ENCODE measurements at regions of chr5 and their contacts with region 1.

Region 1: GRCh38 chr5:118791926-118792734 is 196.2 kb downstream of the DTWD2 start:
- DNase-seq: peak; percentile 51 to 82 (median 79)
- H3K4me3 ChIP-seq: peak overlapping the region in 2 of 7 experiments; percentile 47 to 50
- H3K27ac ChIP-seq: peak overlapping the region in 1 of 2 experiments; percentile 50
- H3K4me1 ChIP-seq: peaks cover 0 to 12% (median 5%) of the 10 kb centered on the region in 4 experiments
- H3K27me3 ChIP-seq: no peaks in the 10 kb centered on the region

Region 2: GRCh38 chr5:118616281-118616680 is 175.8 kb before region 1 on chr5:
- CTCF ChIA-PET with region 1: no interaction called
- POLR2A ChIA-PET with region 1: no interaction called
- DNase-seq: no peak
- H3K4me3 ChIP-seq: no peak overlapping the region
- H3K27ac ChIP-seq: no peak overlapping the region
- H3K4me1 ChIP-seq: no peaks in the 10 kb centered on the region
- H3K27me3 ChIP-seq: no peaks in the 10 kb centered on the region

Region 3: DNA sequence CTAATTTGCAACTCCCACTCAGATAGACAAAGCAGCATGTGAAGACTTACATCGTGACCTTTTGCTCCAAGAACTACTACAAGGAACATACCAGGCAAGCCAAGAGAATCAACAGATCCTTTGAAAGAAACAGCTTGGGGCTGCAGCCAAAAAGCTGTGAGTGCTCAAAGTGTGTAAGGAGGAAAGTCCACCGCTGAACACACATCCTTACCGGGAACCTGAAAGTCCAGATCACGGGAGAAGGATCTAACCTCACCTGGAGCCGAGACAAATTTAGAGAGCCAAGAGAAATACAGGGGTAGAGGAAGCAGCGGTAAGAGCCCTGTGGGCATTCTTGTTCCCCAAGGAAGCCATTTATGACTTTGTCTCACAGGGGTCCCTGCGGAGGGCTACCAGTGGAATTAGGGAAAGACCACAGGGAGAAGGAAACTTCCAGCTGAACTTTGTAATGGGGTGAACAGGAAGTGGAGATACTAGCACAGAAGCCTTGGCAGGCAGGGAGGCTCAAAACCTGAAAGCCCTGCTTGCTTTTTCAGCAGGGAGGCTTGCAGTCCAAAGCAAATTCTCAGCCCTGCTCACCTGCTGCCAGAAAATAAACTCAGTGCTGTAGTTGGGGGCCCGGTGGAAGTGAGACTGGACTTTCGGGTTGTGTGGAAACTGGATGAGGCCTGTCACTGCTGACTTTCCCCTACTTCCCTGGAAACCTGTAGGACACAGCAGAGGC is 154.0 kb before region 1 on chr5:
- CTCF ChIA-PET with region 1: no interaction called
- POLR2A ChIA-PET with region 1: no interaction called
- DNase-seq: no peak
- H3K4me3 ChIP-seq: no peak overlapping the region
- H3K27ac ChIP-seq: no peak overlapping the region
- H3K4me1 ChIP-seq: no peaks in the 10 kb centered on the region
- H3K27me3 ChIP-seq: no peaks in the 10 kb centered on the region

Region 4: GRCh38 chr5:118825226-118825625 is 33.1 kb after region 1 on chr5:
- CTCF ChIA-PET with region 1: interaction called, 11 read pairs
- POLR2A ChIA-PET with region 1: interaction called, 3 read pairs
- DNase-seq: no peak
- H3K4me3 ChIP-seq: no peak overlapping the region
- H3K27ac ChIP-seq: no peak overlapping the region
- H3K4me1 ChIP-seq: peaks cover 3 to 6% (median 5%) of the 10 kb centered on the region in 4 experiments
- H3K27me3 ChIP-seq: no peaks in the 10 kb centered on the region

Region 5: GRCh38 chr5:118996098-118996497 is 204.0 kb after region 1 on chr5:
- CTCF ChIA-PET with region 1: no interaction called
- POLR2A ChIA-PET with region 1: no interaction called
- DNase-seq: peak in 2 of 3 donors; percentile 11 to 35
- H3K4me3 ChIP-seq: no peak overlapping the region
- H3K27ac ChIP-seq: no peak overlapping the region
- H3K4me1 ChIP-seq: no peaks in the 10 kb centered on the region
- H3K27me3 ChIP-seq: no peaks in the 10 kb centered on the region

Measured in common myeloid progenitor, CD34-positive (primary cell).